Heart left ventricle (tissue), 16 donors: ENCODE measurements at regions of chr5 and their contacts with region 1.

Region 1: DNA sequence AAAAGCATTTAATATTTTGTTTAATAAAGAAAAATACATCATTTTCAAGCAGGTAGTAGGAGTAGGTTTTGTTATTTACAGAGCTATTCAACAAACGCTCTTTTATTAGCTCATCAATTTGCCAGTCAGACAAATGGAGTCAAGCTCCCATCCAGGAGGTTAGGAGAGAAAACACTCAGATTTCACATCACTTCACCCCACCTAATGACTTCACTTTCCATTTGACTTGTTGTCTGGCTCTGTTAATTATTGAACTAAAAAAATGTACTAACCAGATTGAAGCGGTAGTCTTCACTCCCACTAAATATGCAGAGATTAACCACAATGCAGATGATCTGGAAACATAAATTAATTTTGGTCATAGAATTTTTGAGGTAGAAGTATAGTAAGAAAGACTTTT is 193.6 kb upstream of the VCAN start:
- DNase-seq: no peak
- ATAC-seq: no peak
- H3K4me3 ChIP-seq: no peak overlapping the region
- H3K27ac ChIP-seq: no peak overlapping the region
- H3K4me1 ChIP-seq: no peaks in the 10 kb centered on the region
- H3K27me3 ChIP-seq: no peaks in the 10 kb centered on the region
- CTCF ChIP-seq: no peak
- POLR2A ChIP-seq: no peak

Region 2: DNA sequence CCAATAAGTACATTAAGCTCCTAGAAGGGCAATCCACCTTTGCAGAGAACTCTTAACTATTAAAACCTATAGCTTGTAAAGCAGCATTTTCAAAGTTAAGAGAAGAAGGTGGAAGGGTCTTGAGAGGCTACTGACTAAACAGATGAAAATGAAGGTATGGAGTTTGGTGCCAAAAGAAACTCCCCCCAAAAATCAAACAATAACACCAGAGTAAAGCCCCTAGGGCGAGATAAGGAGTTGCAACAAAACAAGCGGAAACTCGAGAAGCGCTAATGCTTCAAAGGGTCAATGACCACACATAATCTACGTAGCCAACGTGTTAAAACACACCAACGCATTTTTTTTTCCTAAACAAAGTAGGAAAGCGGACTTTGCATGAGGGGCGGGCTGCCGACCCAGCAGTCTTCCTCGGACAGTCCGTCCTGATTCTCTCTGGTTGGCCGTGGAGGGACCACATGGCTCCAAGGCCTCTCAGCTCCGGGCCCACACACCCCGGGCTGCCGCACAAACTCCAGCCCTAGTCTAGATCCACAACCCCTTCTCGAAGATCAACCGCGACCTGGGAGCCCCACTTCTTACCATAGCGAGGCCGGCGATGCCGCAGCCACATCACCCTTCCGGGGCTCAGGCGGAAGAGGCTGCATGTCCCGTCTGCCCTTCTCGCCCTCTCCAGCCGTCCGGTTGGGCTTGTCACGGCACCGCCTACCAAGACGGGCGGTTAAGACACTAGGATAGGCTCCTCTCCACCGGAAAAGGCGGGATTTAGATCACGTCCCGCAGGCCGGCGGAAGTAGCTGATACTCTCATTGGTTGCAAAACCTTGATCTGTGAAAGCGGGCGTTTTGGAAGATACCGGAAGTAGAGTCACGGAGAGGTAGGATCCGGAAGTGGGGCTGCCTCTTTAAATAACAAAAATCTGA is 201.0 kb before region 1 on chr5 and contains the starts of genes TMEM167A and XRCC4:
- intact Hi-C with region 1: loop called in 1 of 10 experiments (anchors 5 kb)
- DNase-seq: peak; percentile 97 to 99 (median 97)
- ATAC-seq: peak; percentile 100
- H3K4me3 ChIP-seq: peak within 1 kb of the TSS; percentile 62 to 97 (median 76)
- H3K27ac ChIP-seq: peak within 1 kb of the TSS; percentile 54 to 95 (median 85)
- H3K4me1 ChIP-seq: peaks cover 0 to 61% (median 37%) of the 10 kb centered on the region in 12 donors
- H3K27me3 ChIP-seq: no peaks in the 10 kb centered on the region
- CTCF ChIP-seq: no peak
- POLR2A ChIP-seq: peak in 1 of 2 donors; percentile 87
- total RNA-seq, gene TMEM167A: 21.4 to 62.7 (median 48.4) TPM
- total RNA-seq, gene XRCC4: 3.3 to 50.5 (median 8.0) TPM

Region 3: DNA sequence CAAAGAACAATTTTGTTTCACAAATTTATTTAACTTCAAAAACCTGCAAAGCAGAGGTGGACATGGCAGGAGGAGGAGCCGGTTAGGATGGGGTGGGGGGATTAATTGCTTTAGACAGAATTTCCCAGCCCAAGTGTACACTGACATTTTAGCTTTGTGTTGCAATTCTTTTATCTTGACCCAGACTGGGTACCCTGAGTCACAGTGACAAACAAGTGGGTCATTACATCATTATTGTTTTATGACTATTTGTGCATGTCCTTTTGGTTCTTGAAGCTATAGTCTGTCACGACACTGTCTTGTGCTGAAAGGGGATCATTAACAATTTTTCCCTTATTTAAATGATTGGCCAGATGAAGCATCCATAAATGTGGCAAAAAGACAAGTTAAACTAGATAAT is 109.1 kb after region 1 on chr5:
- intact Hi-C with region 1: no loop called
- DNase-seq: no peak
- ATAC-seq: peak in 1 of 4 donors; percentile 50
- H3K4me3 ChIP-seq: no peak overlapping the region
- H3K27ac ChIP-seq: no peak overlapping the region
- H3K4me1 ChIP-seq: no peaks in the 10 kb centered on the region
- H3K27me3 ChIP-seq: no peaks in the 10 kb centered on the region
- CTCF ChIP-seq: no peak
- POLR2A ChIP-seq: no peak